ENCODE measurements at regions of chr4 and their contacts with region 1.

Region 1: GRCh38 chr4:25312496-25313200 is at the start of gene ZCCHC4:
- DNase-seq: peak; percentile 18 to 91
- ATAC-seq: peak; percentile 95 to 97
- H3K4me3 ChIP-seq: peak within 1 kb of the TSS; percentile 95
- H3K27ac ChIP-seq: peak within 1 kb of the TSS; percentile 80 to 93
- H3K4me1 ChIP-seq: peaks cover 7% of the 10 kb centered on the region; the same call in 1 of the 3 replicates
- CTCF ChIP-seq: peak; percentile 92
- EP300 ChIP-seq: no peak
- POLR2A ChIP-seq: peak; percentile 51
- RAD21 ChIP-seq: peak; percentile 14 to 52; a peak in 3 of 5 replicates
- polyA plus RNA-seq, gene ZCCHC4: 8.9 and 10.2 TPM in 2 replicates

Region 2: GRCh38 chr4:25234390-25235370 is 78.0 kb before region 1 on chr4:
- CTCF ChIA-PET with region 1: interaction called, 23 read pairs
- POLR2A ChIA-PET with region 1: interaction called, 3 read pairs
- DNase-seq: peak; percentile 49 to 75
- ATAC-seq: peak; percentile 85
- H3K4me3 ChIP-seq: peak overlapping the region; percentile 98
- H3K27ac ChIP-seq: peak overlapping the region; percentile 91 to 96
- H3K4me1 ChIP-seq: no peaks in the 10 kb centered on the region
- CTCF ChIP-seq: 0 out of 3 replicates have a peak, but pooled peaks have one; percentile 11
- EP300 ChIP-seq: no peak
- POLR2A ChIP-seq: no peak
- RAD21 ChIP-seq: no peak

Region 3: GRCh38 chr4:25299480-25300188 is 13.0 kb before region 1 on chr4:
- CTCF ChIA-PET with region 1: interaction called, 20 read pairs
- POLR2A ChIA-PET with region 1: interaction called, 5 read pairs
- DNase-seq: no peak
- ATAC-seq: no peak
- H3K4me3 ChIP-seq: no peak overlapping the region
- H3K27ac ChIP-seq: no peak overlapping the region
- H3K4me1 ChIP-seq: no peaks in the 10 kb centered on the region
- CTCF ChIP-seq: no peak
- EP300 ChIP-seq: no peak
- POLR2A ChIP-seq: no peak
- RAD21 ChIP-seq: no peak

Region 4: GRCh38 chr4:25330905-25331808 is 18.5 kb after region 1 on chr4:
- CTCF ChIA-PET with region 1: interaction called, 10 read pairs
- POLR2A ChIA-PET with region 1: no interaction called
- DNase-seq: no peak
- ATAC-seq: no peak
- H3K4me3 ChIP-seq: no peak overlapping the region
- H3K27ac ChIP-seq: no peak overlapping the region
- H3K4me1 ChIP-seq: no peaks in the 10 kb centered on the region
- CTCF ChIP-seq: no peak
- EP300 ChIP-seq: no peak
- POLR2A ChIP-seq: no peak
- RAD21 ChIP-seq: no peak

Region 5: GRCh38 chr4:25367004-25367621 is 54.5 kb after region 1 on chr4:
- CTCF ChIA-PET with region 1: interaction called, 31 read pairs
- POLR2A ChIA-PET with region 1: no interaction called
- DNase-seq: peak in 1 of 2 experiments; percentile 39
- ATAC-seq: no peak
- H3K4me3 ChIP-seq: no peak overlapping the region
- H3K27ac ChIP-seq: no peak overlapping the region
- H3K4me1 ChIP-seq: no peaks in the 10 kb centered on the region
- CTCF ChIP-seq: peak; percentile 68
- EP300 ChIP-seq: no peak
- POLR2A ChIP-seq: no peak
- RAD21 ChIP-seq: peak; percentile 63 to 75; a peak in 4 of 5 replicates

Region 6: GRCh38 chr4:25446611-25447010 is 134.0 kb after region 1 on chr4:
- CTCF ChIA-PET with region 1: no interaction called
- POLR2A ChIA-PET with region 1: no interaction called
- DNase-seq: no peak
- ATAC-seq: no peak
- H3K4me3 ChIP-seq: no peak overlapping the region
- H3K27ac ChIP-seq: no peak overlapping the region
- H3K4me1 ChIP-seq: no peaks in the 10 kb centered on the region
- CTCF ChIP-seq: no peak
- EP300 ChIP-seq: no peak
- POLR2A ChIP-seq: no peak
- RAD21 ChIP-seq: no peak